K562 (cell line): ENCODE measurements at regions of chr7 and their contacts with region 1.

Region 1: GRCh38 chr7:87144173-87144657 is 8.0 kb upstream of the DMTF1 start:
- DNase-seq: no peak
- ATAC-seq: no peak
- H3K4me3 ChIP-seq: no peak overlapping the region
- H3K27ac ChIP-seq: peak overlapping the region; percentile 19; the same call in 2 of the 3 replicates
- H3K4me1 ChIP-seq: peaks cover 18 to 43% of the 10 kb centered on the region in 2 experiments
- H3K27me3 ChIP-seq: no peaks in the 10 kb centered on the region
- CTCF ChIP-seq: no peak
- EP300 ChIP-seq: no peak
- POLR2A ChIP-seq: no peak
- RAD21 ChIP-seq: peak; percentile 11 to 16; a peak in 1 of 4 replicates

Region 2: DNA sequence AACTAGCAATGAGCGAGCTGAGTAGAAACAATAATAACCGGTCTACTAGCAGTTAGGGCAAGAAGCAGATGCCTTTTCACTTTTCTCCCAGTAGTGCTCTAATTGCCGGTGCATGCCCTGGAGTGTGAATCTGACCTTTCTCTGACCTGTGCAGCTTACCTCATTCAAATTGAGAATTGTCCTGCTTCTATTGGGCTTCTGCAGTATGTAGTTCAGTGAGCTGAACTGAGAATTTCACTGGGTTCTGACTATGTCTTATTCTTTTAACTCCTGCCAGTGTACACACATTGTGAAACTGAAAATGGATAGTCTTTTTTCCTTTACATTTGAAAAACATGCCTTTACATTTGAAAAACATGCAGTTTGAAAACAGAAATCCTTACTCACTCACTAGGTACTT is 658.4 kb before region 1 on chr7:
- CTCF ChIA-PET with region 1: no interaction called
- POLR2A ChIA-PET with region 1: no interaction called
- in situ Hi-C with region 1: no loop called
- intact Hi-C with region 1: no loop called
- DNase-seq: no peak
- ATAC-seq: no peak
- H3K4me3 ChIP-seq: no peak overlapping the region
- H3K27ac ChIP-seq: no peak overlapping the region
- H3K4me1 ChIP-seq: no peaks in the 10 kb centered on the region
- H3K27me3 ChIP-seq: no peaks in the 10 kb centered on the region
- CTCF ChIP-seq: no peak
- EP300 ChIP-seq: no peak
- POLR2A ChIP-seq: no peak
- RAD21 ChIP-seq: no peak

Region 3: DNA sequence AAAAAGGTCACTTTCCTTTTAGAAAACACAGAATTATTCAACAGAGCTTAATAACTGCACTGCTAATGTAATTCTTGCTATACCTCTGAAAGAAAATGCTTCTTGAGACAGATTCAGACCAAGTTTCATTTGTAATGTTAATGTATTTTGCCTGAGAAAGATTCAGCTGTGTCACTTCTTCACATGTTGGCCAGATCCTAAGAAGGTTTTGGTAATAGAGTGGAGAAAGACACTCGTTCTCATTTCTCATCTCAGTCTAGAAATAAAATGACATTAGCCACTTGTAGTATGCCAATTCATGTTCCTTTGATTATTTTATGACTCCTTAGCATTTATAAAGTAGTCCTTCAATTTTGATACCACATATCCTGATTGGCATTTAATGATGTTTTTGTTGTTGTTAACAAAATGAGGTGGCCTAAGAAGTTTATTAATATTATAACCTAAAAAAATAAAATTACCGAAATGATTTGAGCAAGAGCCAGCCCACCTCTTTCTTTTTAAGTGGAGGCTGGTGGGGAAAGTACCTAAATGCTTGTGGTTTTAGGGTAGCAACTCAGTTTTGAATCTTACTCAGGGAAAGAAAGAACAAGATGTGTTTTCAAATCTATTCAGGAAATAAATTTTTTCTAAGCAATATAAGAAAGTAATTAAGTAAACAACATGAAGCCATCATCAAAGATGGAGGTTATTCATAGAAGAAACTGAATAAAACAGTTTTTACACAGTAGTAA is 68.4 kb before region 1 on chr7:
- CTCF ChIA-PET with region 1: no interaction called
- POLR2A ChIA-PET with region 1: no interaction called
- in situ Hi-C with region 1: loop called (anchors 5 kb)
- intact Hi-C with region 1: no loop called
- DNase-seq: no peak
- ATAC-seq: no peak
- H3K4me3 ChIP-seq: no peak overlapping the region
- H3K27ac ChIP-seq: no peak overlapping the region
- H3K4me1 ChIP-seq: no peaks in the 10 kb centered on the region
- H3K27me3 ChIP-seq: no peaks in the 10 kb centered on the region
- CTCF ChIP-seq: no peak
- EP300 ChIP-seq: no peak
- POLR2A ChIP-seq: no peak
- RAD21 ChIP-seq: no peak

Region 4: GRCh38 chr7:87107949-87108776 is 36.1 kb before region 1 on chr7:
- CTCF ChIA-PET with region 1: no interaction called
- POLR2A ChIA-PET with region 1: no interaction called
- in situ Hi-C with region 1: no loop called
- intact Hi-C with region 1: loop called (anchors 2 kb)
- DNase-seq: peak in 2 of 4 experiments; percentile 33 to 67
- ATAC-seq: peak; percentile 76
- H3K4me3 ChIP-seq: no peak overlapping the region
- H3K27ac ChIP-seq: peak overlapping the region; percentile 48
- H3K4me1 ChIP-seq: peaks cover 16 to 45% of the 10 kb centered on the region in 2 experiments
- H3K27me3 ChIP-seq: no peaks in the 10 kb centered on the region
- CTCF ChIP-seq: no peak
- EP300 ChIP-seq: peak; percentile 4; the same call in 1 of the 2 replicates
- POLR2A ChIP-seq: no peak
- RAD21 ChIP-seq: no peak

Region 5: DNA sequence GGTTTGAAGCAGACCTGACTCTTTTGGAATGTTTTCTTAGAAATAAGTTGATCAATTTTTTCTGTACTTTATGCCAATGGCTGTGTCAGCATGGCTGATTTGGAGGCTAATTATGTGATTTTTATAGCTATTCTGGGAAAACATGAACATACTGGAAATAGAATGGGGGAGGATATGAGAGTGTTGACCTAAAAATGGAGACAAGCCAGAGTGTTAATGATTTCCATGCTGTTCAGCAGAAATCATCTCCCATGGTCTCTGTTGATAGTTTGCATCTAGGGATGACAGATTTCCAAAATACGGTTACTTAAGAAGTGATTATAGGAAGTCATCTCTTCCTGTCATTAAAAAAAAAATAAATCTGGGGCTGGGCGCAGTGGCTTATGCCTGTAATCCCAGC is 24.6 kb before region 1 on chr7:
- CTCF ChIA-PET with region 1: no interaction called
- POLR2A ChIA-PET with region 1: no interaction called
- in situ Hi-C with region 1: no loop called
- intact Hi-C with region 1: no loop called
- DNase-seq: no peak
- ATAC-seq: no peak
- H3K4me3 ChIP-seq: no peak overlapping the region
- H3K27ac ChIP-seq: no peak overlapping the region
- H3K4me1 ChIP-seq: peaks cover 0 to 8% of the 10 kb centered on the region in 2 experiments; a peak in 2 of 5 replicates
- H3K27me3 ChIP-seq: no peaks in the 10 kb centered on the region
- CTCF ChIP-seq: no peak
- EP300 ChIP-seq: no peak
- POLR2A ChIP-seq: no peak
- RAD21 ChIP-seq: no peak